Head of caudate nucleus (tissue), 42 donors: ENCODE measurements at regions of chr1 and their contacts with region 1.

Region 1: GRCh38 chr1:117534995-117535467 is 70.8 kb upstream of the TENT5C start:
- DNase-seq: peak in 20 of 42 donors; percentile 7 to 59 (median 33)

Region 2: GRCh38 chr1:117453958-117454357 is 81.1 kb before region 1 on chr1:
- intact Hi-C with region 1: no loop called
- DNase-seq: no peak

Region 3: GRCh38 chr1:117758444-117759316 is 223.6 kb after region 1 on chr1:
- intact Hi-C with region 1: loop called (anchors 10 kb)
- DNase-seq: peak; percentile 36 to 89 (median 75)

Region 4: DNA sequence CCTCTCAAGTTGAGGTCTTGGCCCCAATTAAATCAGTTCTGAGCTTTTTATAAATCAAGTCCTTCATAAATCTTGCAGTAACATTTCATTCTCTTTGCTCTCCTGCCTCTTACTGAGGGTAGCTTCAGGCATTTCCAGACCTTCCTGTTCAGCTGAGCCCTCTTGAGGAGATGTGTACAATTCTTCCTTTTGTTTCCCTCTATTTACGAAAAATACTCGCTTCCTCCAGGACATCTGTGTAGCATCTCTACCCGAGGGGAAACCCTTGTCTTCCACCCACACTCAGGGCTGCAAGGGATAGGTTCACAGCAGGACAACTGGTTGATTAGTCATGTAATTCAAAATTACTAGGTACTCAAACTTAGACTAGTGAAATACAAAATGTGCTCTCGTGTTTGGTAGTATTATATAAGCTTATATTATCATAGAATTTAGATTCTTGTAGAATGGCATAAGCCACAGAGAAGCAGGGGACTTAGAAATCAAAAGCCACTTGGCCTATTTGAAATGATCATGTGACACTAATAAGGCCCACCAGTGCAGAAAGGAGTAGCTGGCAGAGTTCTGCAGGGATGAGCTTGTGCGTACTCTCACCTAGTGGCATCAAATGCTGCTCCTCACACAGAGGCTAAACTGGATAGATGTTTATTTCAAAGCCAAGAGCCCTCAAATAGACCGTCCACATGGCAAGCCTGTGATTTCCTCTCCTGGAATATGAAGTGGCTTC is 267.7 kb after region 1 on chr1:
- intact Hi-C with region 1: no loop called
- DNase-seq: peak in 1 of 42 donors; percentile 22

Region 5: DNA sequence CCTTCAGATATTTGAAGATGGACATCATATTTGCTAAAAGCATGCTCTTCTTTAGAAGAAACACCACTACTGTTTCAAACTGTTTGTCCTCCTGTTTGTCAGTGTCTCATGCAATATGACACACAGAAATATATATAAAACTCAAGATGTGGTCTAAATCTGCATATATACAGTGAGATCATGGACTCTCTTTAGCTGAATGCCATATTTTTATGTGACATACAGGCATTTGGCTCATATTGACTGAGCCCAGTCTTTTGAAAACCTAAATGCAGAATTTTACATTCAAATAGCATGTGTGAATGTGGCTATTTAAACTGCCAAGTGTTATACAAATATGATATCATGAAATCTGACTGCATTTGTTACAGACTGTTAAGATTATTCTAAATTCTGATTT is 376.0 kb after region 1 on chr1:
- intact Hi-C with region 1: no loop called
- DNase-seq: no peak

Region 6: DNA sequence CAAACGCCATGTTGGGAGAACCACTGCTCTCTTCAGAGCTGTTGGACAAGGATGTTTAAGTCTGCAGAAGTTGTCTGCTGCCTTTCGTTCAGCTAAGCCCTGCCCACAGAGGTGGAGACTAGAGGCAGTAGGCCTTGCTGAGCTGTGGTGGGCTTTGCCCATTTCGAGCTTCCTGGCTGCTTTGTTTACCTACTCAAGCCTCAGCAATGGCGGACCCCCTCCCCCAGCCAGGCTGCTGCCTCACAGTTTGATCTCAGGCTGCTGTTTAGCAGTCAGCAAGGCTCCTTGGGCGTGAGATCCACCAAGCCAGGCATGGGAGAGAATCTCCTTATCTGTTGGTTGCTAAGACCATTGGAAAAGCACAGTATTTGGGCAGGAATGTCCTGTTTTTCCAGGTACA is 469.3 kb after region 1 on chr1:
- intact Hi-C with region 1: no loop called
- DNase-seq: no peak